ENCODE measurements at regions of chr1 and their contacts with region 1.

Region 1: DNA sequence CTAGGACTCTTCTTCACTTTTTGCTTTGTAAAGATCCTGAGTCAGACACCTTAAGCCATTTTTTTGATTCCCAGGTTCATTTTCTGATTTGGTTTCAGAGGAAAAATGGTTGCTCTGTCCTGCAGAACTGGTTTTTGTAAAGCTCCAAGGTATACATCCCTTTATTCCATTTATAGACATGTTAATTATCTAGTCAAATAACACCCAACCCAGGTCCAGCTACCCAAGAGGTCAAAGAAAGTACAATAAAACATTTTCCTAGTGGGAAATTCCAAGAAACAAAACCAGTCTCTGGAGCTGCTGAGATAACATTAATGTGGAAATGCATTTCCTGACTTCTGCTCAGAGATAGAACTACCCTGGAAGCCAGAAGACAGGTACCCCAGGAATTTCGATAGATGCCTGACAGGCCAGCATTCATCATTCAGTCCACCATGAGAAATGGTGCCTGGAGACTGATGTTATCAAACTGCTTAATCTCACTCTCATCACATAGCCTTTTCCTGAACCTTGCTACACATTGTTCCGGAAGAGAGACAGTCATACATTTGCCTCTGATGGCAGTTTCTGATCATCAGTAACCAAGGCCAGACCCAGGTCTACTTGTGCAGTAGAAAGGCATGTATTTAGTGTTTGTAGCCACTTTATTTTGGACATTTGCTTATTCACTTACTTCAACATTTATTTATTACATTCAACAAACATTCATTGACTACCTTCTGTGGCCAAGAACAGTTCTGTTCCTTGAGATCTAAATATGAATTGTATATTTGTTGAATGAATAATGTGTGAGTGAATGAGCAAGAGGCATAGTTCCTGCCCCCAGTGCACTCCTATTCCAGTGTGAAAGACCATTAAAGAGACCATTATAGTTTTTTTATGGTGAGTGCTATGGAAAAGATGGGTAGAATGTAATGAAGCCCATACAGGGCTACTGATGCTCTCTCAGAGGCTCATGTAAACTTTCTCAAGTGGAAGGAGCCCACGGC is 485.6 kb downstream of the NUF2 start:
- DNase-seq: no peak
- ATAC-seq: no peak
- H3K4me3 ChIP-seq: no peak overlapping the region
- H3K27ac ChIP-seq: no peak overlapping the region
- H3K4me1 ChIP-seq: no peaks in the 10 kb centered on the region
- H3K27me3 ChIP-seq: no peaks in the 10 kb centered on the region
- CTCF ChIP-seq: no peak

Region 2: GRCh38 chr1:163561580-163562295 is 245.6 kb before region 1 on chr1:
- intact Hi-C with region 1: loop called in 1 of 10 experiments (anchors 10 kb)
- DNase-seq: no peak
- ATAC-seq: peak in 2 of 8 donors; percentile 44 to 50
- H3K4me3 ChIP-seq: no peak overlapping the region
- H3K27ac ChIP-seq: no peak overlapping the region
- H3K4me1 ChIP-seq: no peaks in the 10 kb centered on the region
- H3K27me3 ChIP-seq: no peaks in the 10 kb centered on the region
- CTCF ChIP-seq: peak in 8 of 9 donors; percentile 16 to 67 (median 53)

Measured in heart right ventricle (tissue), 16 donors.